ENCODE measurements at regions of chr4 and their contacts with region 1.

Region 1: DNA sequence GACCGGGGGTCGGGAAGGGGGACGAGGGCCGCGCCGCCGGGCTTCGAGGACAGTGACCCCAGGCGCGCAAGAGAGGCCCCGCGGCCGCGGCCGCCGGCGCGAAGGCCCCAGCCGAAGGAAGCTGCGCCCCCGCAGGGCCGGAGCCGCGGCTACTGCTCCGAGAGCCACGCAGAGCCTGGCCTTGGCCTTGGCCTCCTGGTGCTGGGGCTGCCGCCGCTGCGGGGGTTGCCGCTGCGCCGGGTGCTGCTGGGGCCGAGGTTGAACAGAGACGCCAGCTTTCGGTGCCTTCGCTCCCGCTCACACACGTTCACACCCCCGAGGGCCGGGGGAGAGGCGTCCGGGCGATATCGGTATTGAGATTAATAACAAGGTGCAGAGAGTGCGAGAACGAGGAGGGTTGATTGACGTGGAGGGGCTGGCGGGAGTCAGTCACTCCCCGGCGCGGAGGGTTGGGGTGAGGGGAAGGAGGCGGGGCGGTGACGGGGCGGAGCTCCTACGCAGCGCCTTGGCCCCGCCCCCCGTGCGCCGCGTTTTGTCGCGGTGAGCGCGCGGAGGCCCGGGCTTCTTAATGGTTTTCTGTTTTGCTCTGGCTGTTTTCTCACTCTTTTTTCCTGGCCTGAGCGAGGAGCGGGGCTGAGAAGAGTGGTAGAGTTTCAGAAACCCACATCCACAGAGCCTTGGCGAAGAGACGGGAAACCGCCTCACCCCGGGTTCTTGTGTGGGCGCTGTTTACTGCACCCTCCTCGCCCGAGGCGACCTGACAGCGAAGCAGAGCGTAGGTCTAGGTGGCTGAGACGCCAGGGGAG is 878 bp upstream of the CNOT6L start:
- DNase-seq: peak; percentile 94
- H3K4me3 Mint-ChIP-seq: peak overlapping the region; percentile 95
- H3K27ac Mint-ChIP-seq: peak overlapping the region; percentile 99
- H3K4me1 Mint-ChIP-seq: peaks cover 42% of the 10 kb centered on the region
- H3K27me3 Mint-ChIP-seq: no peaks in the 10 kb centered on the region

Region 2: DNA sequence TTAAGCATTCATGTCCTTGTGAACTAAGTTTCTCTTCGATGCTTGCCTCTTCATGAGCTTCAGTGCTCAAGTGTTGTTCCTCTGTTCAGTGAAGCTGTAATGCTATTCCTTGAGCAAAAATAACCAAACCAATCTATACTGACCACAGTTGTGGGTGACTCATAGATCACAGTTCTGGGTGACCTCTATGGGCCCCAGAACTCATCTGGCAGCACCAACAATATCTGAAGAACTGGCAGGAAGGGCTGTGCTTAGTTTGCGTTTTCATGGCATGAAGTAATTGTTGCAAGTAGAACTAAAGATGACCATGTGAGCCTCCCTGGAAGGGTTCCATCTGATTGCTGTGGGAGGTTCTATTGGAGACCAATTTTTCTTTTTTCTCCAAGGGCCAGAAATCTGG is 556.8 kb before region 1 on chr4:
- CTCF ChIA-PET with region 1: no interaction called
- POLR2A ChIA-PET with region 1: no interaction called
- DNase-seq: no peak
- H3K4me3 Mint-ChIP-seq: no peak overlapping the region
- H3K27ac Mint-ChIP-seq: no peak overlapping the region
- H3K4me1 Mint-ChIP-seq: no peaks in the 10 kb centered on the region
- H3K27me3 Mint-ChIP-seq: peaks cover 3% of the 10 kb centered on the region

Region 3: GRCh38 chr4:77852892-77853495 is 32.9 kb after region 1 on chr4:
- CTCF ChIA-PET with region 1: interaction called, 8 read pairs
- POLR2A ChIA-PET with region 1: interaction called, 10 read pairs
- DNase-seq: peak; percentile 83
- H3K4me3 Mint-ChIP-seq: peak overlapping the region; percentile 71
- H3K27ac Mint-ChIP-seq: peak overlapping the region; percentile 99
- H3K4me1 Mint-ChIP-seq: peaks cover 63% of the 10 kb centered on the region
- H3K27me3 Mint-ChIP-seq: no peaks in the 10 kb centered on the region

Region 4: GRCh38 chr4:77862478-77863216 is 42.6 kb after region 1 on chr4 and contains the start of gene MRPL1:
- CTCF ChIA-PET with region 1: interaction called, 14 read pairs
- POLR2A ChIA-PET with region 1: interaction called, 19 read pairs
- DNase-seq: peak; percentile 91
- H3K4me3 Mint-ChIP-seq: peak within 1 kb of the TSS; percentile 97
- H3K27ac Mint-ChIP-seq: peak within 1 kb of the TSS; percentile 98
- H3K4me1 Mint-ChIP-seq: peaks cover 60% of the 10 kb centered on the region
- H3K27me3 Mint-ChIP-seq: peaks cover 2% of the 10 kb centered on the region
- total RNA-seq, gene MRPL1: 33.6 to 35.8 TPM

Region 5: DNA sequence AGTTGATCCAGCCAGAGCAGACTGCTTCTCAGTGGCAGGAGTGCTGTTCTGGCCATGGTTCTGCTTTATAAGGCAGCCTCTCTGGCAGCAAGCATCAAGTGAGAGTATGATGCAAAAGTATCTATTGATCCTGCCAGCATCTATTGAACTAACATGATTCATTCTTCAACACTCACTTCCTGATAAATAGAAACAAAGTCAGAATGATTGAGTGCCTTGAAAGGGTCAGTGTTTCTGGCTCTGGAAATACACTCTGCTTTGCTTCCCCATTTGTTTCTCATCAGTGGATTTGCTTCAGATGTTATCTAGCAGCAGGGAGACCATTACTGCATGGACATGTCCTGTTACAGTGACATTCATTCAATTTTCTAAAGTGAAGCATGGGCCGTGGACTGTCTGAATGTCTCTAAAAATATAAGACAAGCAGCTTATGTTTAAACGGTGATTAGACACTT is 170.9 kb after region 1 on chr4:
- CTCF ChIA-PET with region 1: no interaction called
- POLR2A ChIA-PET with region 1: no interaction called
- DNase-seq: no peak
- H3K4me3 Mint-ChIP-seq: no peak overlapping the region
- H3K27ac Mint-ChIP-seq: no peak overlapping the region
- H3K4me1 Mint-ChIP-seq: no peaks in the 10 kb centered on the region
- H3K27me3 Mint-ChIP-seq: peaks cover 13% of the 10 kb centered on the region